K562 (cell line): ENCODE measurements at regions of chr6 and their contacts with region 1.

Region 1: DNA sequence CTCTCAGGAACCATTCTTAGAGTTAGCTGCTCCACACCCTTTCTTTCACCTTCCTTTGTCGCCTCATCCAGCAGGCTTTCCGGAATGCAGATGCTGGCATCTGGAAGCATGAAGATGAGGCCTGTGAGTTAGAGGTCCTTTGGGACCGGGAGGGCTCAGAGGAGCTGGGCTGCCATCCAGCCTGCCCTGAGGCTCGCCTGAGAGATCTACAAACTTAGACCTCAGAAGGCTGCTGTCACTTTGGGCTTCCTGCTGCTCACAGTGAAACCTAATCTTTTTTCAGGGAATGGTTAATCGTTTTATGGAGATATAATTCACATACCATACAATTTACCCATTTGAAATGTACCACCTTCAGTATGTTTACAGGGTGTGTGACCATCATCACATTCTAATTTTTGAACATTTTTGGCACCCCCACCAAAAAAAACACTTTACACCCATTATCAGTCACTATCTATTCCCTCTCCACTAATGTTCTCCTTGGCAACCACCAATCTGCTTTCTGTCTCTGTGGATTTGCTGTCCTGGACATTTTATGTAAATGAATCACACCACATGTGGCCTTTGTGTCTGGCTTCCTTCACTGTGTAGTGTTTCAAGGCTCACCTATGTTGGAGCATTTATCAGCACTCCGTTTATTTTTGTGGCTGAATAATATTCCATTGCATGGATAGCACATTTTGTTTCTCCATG is 20.0 kb upstream of the MPC1 start:
- DNase-seq: no peak
- ATAC-seq: no peak
- H3K4me3 ChIP-seq: no peak overlapping the region
- H3K27ac ChIP-seq: no peak overlapping the region
- H3K4me1 ChIP-seq: peaks cover 0 to 3% of the 10 kb centered on the region in 2 experiments; a peak in 1 of 5 replicates
- H3K27me3 ChIP-seq: peaks cover 38 to 61% of the 10 kb centered on the region in 2 experiments
- CTCF ChIP-seq: no peak
- EP300 ChIP-seq: no peak
- POLR2A ChIP-seq: no peak
- RAD21 ChIP-seq: no peak

Region 2: DNA sequence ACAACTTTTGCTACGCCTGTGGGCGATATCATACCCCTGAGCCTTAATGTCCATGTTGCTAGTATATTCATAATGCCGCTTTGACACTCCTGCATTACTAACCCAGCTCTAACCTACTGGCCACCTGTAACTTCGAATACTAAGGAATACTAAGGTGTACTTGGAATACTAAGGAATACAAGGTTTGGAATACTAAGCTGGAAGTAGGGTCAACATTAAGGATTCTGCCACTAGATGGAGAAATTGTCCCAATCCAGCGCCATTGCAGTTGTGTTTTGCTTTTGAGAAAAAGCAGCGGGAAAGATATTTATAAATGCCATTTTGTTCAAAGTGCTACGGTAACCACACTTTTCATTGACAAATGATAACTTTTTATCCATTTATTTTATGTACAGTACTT is 245.8 kb before region 1 on chr6:
- CTCF ChIA-PET with region 1: interaction called, 5 read pairs
- POLR2A ChIA-PET with region 1: no interaction called
- in situ Hi-C with region 1: no loop called
- intact Hi-C with region 1: loop called (anchors 1 kb)
- DNase-seq: no peak
- ATAC-seq: no peak
- H3K4me3 ChIP-seq: no peak overlapping the region
- H3K27ac ChIP-seq: no peak overlapping the region
- H3K4me1 ChIP-seq: peaks cover 0 to 3% of the 10 kb centered on the region in 2 experiments; a peak in 1 of 5 replicates
- H3K27me3 ChIP-seq: peaks cover 17 to 50% of the 10 kb centered on the region in 2 experiments
- CTCF ChIP-seq: peak in 2 of 3 experiments; percentile 38 to 52; a peak in 4 of 6 replicates
- EP300 ChIP-seq: no peak
- POLR2A ChIP-seq: no peak
- RAD21 ChIP-seq: peak; percentile 54 to 73

Region 3: DNA sequence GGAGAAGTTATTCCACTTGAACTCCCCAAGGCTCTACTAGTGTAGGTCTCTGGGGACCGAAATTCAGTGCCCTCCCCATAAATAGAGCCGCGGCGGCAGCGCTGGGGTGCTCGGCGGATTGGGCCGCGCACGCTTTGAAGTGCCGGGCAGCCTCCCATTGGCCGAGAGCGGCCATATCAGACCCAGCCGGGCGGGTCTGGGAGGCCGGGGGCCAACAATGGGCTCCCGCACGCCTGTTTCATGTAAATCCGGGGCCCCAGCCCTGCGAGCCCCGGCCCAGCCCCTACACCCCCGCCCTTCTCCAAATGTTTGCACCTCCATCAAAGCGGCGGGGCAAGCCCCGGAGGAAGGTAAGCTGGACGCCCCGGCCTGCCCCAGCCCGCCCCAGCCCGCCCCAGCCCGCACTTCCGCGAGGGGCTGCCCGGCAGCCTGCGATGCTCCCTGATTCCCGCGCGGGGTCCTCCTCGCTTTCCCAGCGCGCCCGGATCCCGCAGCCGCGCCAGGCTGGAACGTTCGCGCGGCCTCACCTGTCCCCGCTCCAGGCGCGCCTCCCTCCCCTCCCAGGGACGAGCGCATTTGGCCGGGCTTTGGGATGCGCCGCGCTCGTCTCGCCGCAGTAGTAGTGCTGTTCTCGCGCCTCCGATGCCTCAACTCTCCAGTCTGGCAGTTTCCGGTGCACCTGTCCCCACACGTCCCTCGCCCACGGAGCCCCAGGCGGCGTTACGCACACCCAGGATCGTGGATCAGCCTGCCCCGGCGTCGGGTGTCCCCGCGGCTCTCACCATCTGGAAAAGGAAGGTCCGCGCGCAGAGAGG is 234.7 kb before region 1 on chr6 and contains the start of gene TBXT:
- CTCF ChIA-PET with region 1: no interaction called
- POLR2A ChIA-PET with region 1: no interaction called
- in situ Hi-C with region 1: no loop called
- intact Hi-C with region 1: no loop called
- DNase-seq: peak in 1 of 4 experiments; percentile 6
- ATAC-seq: no peak
- H3K4me3 ChIP-seq: no peak within 1 kb of the TSS
- H3K27ac ChIP-seq: no peak within 1 kb of the TSS
- H3K4me1 ChIP-seq: peaks cover 0 to 17% of the 10 kb centered on the region in 2 experiments; a peak in 1 of 5 replicates
- H3K27me3 ChIP-seq: peaks cover 33 to 69% of the 10 kb centered on the region in 2 experiments
- CTCF ChIP-seq: no peak
- EP300 ChIP-seq: no peak
- POLR2A ChIP-seq: no peak
- RAD21 ChIP-seq: no peak
- polyA plus RNA-seq, gene TBXT: not detected

Region 4: DNA sequence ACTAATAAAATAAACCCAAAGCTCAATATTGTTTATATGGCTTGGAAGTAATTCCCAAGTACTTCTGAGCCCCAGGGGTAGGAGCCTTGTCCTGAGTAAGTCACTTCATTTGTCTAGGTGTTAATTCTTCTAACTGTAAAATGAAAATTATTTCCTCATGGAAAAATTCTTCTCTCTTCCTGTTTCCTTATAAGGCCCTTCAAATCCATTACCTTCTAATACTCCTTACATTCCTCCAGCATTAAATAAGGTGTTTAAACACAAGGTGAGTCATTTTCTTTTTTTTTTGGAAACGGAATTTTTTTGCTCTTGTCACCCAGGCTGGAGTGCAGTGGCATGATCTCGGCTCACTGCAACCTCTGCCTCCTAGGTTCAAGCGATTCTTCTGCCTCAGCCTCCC is 136.4 kb before region 1 on chr6:
- CTCF ChIA-PET with region 1: no interaction called
- POLR2A ChIA-PET with region 1: no interaction called
- in situ Hi-C with region 1: no loop called
- intact Hi-C with region 1: no loop called
- DNase-seq: no peak
- ATAC-seq: no peak
- H3K4me3 ChIP-seq: no peak overlapping the region
- H3K27ac ChIP-seq: no peak overlapping the region
- H3K4me1 ChIP-seq: no peaks in the 10 kb centered on the region
- H3K27me3 ChIP-seq: peaks cover 32 to 59% of the 10 kb centered on the region in 2 experiments
- CTCF ChIP-seq: no peak
- EP300 ChIP-seq: no peak
- POLR2A ChIP-seq: no peak
- RAD21 ChIP-seq: no peak

Region 5: DNA sequence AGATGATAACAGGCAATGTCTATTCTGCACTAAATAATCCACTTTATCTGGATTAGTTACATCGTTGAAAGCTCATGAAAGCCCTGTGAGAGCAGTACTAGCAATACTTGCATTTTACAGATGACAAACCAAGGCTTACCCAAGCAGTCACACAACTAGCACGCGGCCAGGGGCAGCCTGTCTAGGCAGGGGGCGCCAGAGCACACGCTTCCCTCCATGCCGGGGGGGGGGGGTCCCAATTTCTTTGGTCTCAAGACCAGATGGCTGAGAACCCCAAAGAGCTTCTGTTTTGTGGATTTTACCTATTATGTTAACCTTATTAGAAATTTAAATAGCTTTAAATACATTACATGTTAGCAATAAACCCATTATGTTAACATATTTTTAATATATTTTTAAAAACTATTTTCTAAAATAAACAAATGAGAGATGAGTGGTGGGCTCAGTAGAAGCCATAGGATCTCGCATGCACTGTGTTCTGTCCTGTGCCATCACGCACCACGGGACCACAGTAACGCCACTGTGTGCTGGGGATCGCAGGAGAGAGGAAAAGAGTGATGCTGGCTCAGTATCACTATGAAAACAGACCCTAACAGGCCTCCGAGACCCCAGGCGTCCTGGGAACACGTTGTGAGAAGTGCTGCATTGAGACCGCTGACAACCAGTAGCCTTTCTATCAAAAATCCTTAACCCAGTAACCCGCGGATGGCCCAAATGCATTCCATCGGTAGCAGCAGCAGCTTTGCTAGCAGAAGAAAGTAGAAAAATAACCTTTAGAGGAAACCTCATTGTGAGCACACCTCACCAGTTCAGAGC is 89.3 kb before region 1 on chr6:
- CTCF ChIA-PET with region 1: interaction called, 24 read pairs
- POLR2A ChIA-PET with region 1: interaction called, 4 read pairs
- in situ Hi-C with region 1: no loop called
- intact Hi-C with region 1: loop called (anchors 1 kb)
- DNase-seq: peak; percentile 79 to 85 (median 82)
- ATAC-seq: peak; percentile 92
- H3K4me3 ChIP-seq: no peak overlapping the region
- H3K27ac ChIP-seq: no peak overlapping the region
- H3K4me1 ChIP-seq: peaks cover 0 to 4% of the 10 kb centered on the region in 2 experiments; a peak in 2 of 5 replicates
- H3K27me3 ChIP-seq: peaks cover 13 to 22% of the 10 kb centered on the region in 2 experiments
- CTCF ChIP-seq: peak; percentile 88 to 90 (median 89)
- EP300 ChIP-seq: 0 out of 2 replicates have a peak, but pooled peaks have one; percentile 7
- POLR2A ChIP-seq: no peak
- RAD21 ChIP-seq: peak; percentile 77 to 89

Region 6: DNA sequence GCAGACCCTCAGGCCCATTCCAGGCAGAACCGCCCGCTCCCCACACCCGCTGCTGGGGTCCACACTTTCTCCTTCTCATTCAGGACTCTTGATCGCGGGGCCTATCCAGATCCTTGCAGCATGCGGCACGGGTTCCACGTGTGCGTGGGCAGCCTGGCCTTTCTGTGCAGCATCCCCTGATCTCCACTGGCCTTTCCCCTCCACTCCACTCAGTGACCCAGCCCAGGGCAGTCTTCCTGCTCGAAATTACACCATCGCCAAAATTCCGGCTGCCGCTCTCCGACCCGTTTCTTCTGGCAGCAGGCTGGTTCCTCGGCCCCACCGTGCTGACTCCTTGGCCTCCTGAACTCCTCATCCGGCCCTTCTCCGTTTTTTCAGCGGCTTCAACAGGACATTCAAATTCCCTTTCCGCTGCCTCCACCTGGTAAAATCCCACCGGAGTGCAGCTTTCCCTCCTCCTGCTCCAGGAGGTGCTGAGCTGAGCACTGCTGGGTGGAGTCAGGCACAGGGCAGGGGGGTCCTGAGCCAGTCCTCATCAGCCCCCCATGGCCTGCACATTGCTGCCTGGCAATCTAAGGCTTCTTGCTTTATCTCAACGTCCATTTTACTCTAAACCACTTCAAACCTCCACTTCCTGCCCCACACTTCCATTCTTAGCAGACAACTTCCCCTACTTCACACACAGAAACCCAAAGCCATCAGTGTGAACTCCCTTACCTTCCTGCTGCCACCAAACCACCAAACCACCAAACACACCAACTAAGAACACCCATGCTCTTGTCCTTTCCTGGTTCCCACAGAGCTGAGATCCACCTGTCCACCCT is 69.3 kb before region 1 on chr6:
- CTCF ChIA-PET with region 1: interaction called, 3 read pairs
- POLR2A ChIA-PET with region 1: no interaction called
- in situ Hi-C with region 1: no loop called
- intact Hi-C with region 1: loop called (anchors 5 kb)
- DNase-seq: no peak
- ATAC-seq: no peak
- H3K4me3 ChIP-seq: no peak overlapping the region
- H3K27ac ChIP-seq: no peak overlapping the region
- H3K4me1 ChIP-seq: peaks cover 5 to 14% of the 10 kb centered on the region in 2 experiments; a peak in 4 of 5 replicates
- H3K27me3 ChIP-seq: no peaks in the 10 kb centered on the region
- CTCF ChIP-seq: no peak
- EP300 ChIP-seq: no peak
- POLR2A ChIP-seq: peak; percentile 54
- RAD21 ChIP-seq: no peak

Region 7: DNA sequence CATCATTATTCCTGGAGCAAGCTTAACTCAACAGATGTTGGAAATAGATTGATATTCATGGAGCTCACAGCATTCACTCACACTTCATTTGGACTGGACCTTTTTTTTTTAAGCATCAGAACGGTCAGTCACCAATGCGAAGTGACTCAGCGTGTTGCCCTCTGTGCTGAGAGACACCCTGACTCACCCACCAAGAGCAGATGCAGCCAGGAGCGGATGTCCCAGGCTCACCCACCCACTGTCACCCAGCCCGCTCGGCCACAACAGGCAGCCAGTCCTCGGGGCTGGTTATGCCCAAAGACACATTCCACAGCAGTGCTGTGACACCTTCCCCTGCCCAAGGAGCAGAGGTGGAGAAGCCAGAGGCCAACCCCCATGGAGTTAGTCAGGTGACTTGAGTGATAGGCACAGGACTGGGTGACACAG is 537.9 kb after region 1 on chr6:
- CTCF ChIA-PET with region 1: no interaction called
- POLR2A ChIA-PET with region 1: no interaction called
- in situ Hi-C with region 1: no loop called
- intact Hi-C with region 1: no loop called
- DNase-seq: peak; percentile 56 to 83 (median 70)
- ATAC-seq: peak; percentile 80
- H3K4me3 ChIP-seq: no peak overlapping the region
- H3K27ac ChIP-seq: peak overlapping the region; percentile 48; the same call in 2 of the 3 replicates
- H3K4me1 ChIP-seq: peaks cover 8 to 32% of the 10 kb centered on the region in 2 experiments
- H3K27me3 ChIP-seq: no peaks in the 10 kb centered on the region
- CTCF ChIP-seq: no peak; a peak in 1 of 6 replicates
- EP300 ChIP-seq: peak; percentile 36; the same call in 1 of the 2 replicates
- POLR2A ChIP-seq: no peak
- RAD21 ChIP-seq: no peak